ENCODE measurements at regions of chr20 and their contacts with region 1.

Region 1: DNA sequence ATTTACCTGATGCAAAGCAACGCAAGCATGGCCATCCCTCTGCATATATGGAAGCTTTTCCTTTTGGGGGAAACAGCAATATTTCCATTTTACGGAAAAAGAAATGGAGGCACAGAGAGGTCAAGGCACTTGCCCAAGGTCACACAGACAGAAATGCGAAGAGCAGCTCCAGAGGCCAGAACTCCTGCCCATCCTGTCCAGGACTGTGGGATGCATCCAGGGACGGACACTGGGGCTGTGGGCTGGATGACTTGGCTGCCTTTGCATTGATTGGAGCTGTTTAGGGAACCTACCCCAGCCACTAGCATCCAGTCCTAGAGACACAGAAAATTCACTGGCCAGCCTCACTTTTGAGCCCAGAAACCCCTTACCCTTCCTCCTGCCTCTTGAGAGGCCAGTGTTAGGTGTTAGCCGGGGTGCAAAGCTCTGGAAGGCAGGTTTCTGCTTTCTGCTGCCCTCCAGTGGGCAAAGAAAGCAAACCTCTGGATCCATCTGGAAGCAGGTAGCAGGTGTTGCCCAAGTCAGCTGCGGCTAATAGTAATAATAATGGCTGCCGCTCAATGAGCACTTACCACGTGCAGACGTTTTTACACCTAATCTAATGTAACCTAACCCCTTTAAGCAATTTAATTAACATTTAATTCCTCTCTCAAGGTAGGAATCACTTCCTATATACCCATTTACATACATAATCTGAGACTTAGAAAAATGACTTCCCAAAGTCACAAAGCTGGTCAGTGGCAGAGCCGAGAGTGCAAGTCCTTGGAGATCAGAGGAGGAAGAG is 31.7 kb upstream of the CCN5 start:
- DNase-seq: peak; percentile 75
- H3K4me3 ChIP-seq: no peak overlapping the region; a peak in 1 of 4 replicates
- H3K27ac ChIP-seq: no peak overlapping the region
- H3K4me1 ChIP-seq: peaks cover 0 to 10% of the 10 kb centered on the region in 2 experiments; a peak in 1 of 4 replicates
- H3K27me3 ChIP-seq: no peaks in the 10 kb centered on the region
- CTCF ChIP-seq: peak; percentile 77
- EP300 ChIP-seq: no peak
- RAD21 ChIP-seq: peak; percentile 70

Region 2: DNA sequence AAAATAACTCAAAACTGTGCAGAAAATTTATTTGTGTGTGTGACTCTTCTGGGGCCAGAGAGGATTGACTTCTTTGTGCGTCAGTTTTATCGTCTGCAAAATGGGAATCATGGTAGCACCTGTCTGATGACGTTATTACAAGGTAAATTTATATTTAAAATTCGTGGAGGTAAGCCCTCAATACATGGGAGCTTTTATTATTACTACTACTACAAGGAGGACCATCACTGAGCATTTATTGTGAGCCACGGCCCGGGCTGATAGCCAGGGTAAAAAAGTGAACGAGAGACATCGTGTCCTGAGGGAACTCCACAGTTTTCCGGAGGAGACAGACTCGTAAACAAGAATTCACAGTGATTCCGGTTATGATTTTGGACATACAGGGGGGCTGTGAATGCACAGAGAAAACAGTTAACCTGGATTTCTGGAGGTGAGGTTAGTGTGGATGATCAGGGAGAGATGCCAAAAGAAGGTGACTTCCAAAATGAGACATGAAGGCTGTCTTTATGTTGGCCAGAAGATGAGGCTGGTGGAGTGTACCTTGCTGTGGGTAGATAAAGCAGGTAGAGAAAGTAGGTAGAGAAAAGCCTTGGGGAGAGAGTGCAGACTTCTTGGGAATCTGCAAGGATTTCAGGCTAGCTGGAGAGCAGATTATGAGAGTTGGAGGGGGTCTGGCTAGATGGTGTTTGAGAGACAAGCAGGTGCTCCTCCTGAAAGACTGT is 151.0 kb before region 1 on chr20:
- CTCF ChIA-PET with region 1: no interaction called
- POLR2A ChIA-PET with region 1: no interaction called
- DNase-seq: no peak
- H3K4me3 ChIP-seq: peak overlapping the region; percentile 67 to 80
- H3K27ac ChIP-seq: peak overlapping the region; percentile 7 to 71
- H3K4me1 ChIP-seq: peaks cover 6 to 11% of the 10 kb centered on the region in 2 experiments
- H3K27me3 ChIP-seq: no peaks in the 10 kb centered on the region
- CTCF ChIP-seq: no peak
- EP300 ChIP-seq: no peak
- RAD21 ChIP-seq: no peak

Region 3: DNA sequence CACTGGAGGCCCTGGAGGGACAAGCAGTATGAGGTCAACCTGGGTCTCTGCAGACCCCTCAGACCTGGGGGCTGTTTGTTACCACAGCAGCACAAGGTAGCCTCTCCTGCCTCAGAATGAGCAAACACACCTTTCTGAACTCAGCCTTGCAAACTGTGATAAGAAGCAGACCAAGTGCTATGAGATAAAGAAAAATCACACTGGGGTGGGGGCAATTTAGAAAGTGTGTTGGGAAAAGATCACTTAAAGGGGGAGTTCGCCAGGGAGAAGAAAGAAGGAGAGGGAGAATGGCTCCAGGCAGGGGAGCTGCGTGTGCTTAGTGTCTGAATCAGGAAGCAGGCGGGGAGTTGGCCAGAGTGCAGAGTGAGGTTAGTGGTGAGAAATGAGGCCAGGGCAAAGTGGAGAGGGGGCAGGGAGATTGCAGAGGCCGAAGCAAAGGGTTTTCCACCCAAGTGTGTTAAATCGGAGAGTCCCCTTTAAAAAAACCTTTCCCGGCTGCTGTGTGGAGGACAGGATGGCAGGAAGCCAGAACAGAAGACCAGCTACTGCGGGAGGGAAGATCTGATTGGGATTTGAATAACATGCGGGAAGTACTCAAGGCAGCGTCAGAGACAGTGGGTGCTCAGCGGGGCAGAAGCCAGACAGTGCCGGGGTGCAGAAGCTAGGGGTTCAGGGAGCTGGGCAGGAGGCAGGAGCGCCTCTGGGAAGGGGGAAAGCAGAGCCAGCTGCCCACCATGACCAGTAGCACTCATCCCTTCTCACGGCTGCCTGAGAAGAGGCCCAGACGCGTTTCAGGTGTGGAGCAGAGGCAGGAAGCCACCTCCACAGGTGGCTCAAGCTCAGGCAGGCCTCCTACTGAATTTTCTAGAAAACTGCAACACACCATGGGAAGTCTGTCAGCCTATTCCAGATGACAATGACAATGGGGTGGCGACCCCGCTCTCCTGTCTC is 41.0 kb before region 1 on chr20:
- CTCF ChIA-PET with region 1: interaction called, 11 read pairs
- POLR2A ChIA-PET with region 1: no interaction called
- DNase-seq: peak; percentile 81
- H3K4me3 ChIP-seq: 0 out of 4 replicates have a peak overlapping the region, but pooled peaks of 1 of the 2 experiments have one; percentile 22
- H3K27ac ChIP-seq: peak overlapping the region; percentile 73 to 76
- H3K4me1 ChIP-seq: peaks cover 24 to 31% of the 10 kb centered on the region in 2 experiments; a peak in 3 of 4 replicates
- H3K27me3 ChIP-seq: no peaks in the 10 kb centered on the region
- CTCF ChIP-seq: no peak
- EP300 ChIP-seq: 0 out of 4 replicates have a peak, but pooled peaks of 1 of the 2 experiments have one; percentile 10
- RAD21 ChIP-seq: no peak; the same call in 1 of the 2 replicates

Region 4: GRCh38 chr20:44702776-44703175 is 19.3 kb after region 1 on chr20:
- CTCF ChIA-PET with region 1: interaction called, 61 read pairs
- POLR2A ChIA-PET with region 1: no interaction called
- DNase-seq: no peak
- H3K4me3 ChIP-seq: no peak overlapping the region
- H3K27ac ChIP-seq: no peak overlapping the region
- H3K4me1 ChIP-seq: peaks cover 5 to 14% of the 10 kb centered on the region in 2 experiments; a peak in 2 of 4 replicates
- H3K27me3 ChIP-seq: no peaks in the 10 kb centered on the region
- CTCF ChIP-seq: no peak
- EP300 ChIP-seq: no peak
- RAD21 ChIP-seq: no peak

Region 5: DNA sequence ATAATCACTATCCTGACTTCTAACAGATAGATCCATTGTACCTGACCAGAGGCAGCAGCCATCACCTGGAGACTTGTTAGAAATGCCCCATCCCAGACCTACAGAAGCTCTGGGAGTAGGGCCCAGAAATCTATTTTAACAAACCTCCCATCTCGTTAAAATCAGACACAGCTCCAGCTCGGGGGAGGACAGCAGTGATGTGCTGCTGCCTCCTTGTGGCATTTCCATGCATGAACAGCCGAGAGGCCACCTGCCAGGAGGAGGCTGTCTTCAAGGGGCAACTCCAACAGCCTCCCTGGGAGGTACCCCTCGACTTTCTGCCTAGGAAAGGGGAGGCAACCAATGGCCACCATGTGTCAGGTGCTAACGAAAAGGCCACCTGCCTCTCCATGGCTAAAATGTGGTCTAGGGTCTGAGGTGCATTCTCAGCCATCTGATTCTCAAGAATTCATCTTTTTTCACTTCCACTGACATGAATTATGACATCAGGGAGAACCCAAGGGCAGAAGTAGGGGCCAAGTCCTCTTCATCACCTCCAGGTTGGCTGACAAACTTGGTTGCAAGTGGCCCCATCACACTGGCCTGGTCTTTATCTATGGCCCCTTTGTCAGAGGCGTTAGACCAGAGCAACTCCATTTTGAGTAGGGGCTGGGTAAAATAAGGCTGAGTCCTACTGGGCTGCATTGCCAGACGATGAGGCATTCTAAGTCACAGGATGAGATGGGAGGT is 50.0 kb after region 1 on chr20:
- CTCF ChIA-PET with region 1: interaction called, 183 read pairs
- POLR2A ChIA-PET with region 1: interaction called, 3 read pairs
- DNase-seq: peak; percentile 71
- H3K4me3 ChIP-seq: no peak overlapping the region; a peak in 1 of 4 replicates
- H3K27ac ChIP-seq: no peak overlapping the region
- H3K4me1 ChIP-seq: peaks cover 17 to 28% of the 10 kb centered on the region in 2 experiments
- H3K27me3 ChIP-seq: no peaks in the 10 kb centered on the region
- CTCF ChIP-seq: peak; percentile 95
- EP300 ChIP-seq: no peak
- RAD21 ChIP-seq: peak; percentile 97

Region 6: DNA sequence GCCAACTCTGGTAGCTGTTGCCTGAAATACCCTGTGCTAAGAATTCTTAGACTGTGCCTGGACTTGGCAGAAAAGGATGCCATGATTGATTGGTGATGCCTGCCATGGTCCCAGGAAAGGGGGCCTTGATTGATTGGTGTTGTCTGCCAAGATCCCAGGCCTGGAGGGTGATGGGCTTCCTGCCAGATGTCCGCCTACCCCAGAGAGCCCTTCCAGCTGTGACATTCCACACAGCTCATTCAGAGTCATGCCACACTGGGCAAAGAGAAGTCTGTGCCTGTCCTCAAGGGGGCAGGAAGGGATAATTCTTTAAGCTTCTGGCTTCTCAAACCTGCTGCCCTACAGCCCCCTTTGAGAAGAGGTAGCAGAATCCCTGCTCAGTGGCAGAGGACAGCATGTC is 102.3 kb after region 1 on chr20:
- CTCF ChIA-PET with region 1: interaction called, 18 read pairs
- POLR2A ChIA-PET with region 1: no interaction called
- DNase-seq: peak; percentile 84
- H3K4me3 ChIP-seq: no peak overlapping the region
- H3K27ac ChIP-seq: peak overlapping the region in 1 of 2 experiments; percentile 47; a peak in 2 of 4 replicates
- H3K4me1 ChIP-seq: peaks cover 0 to 12% of the 10 kb centered on the region in 2 experiments; a peak in 1 of 4 replicates
- H3K27me3 ChIP-seq: no peaks in the 10 kb centered on the region
- CTCF ChIP-seq: peak; percentile 21; the same call in 1 of the 2 replicates
- EP300 ChIP-seq: peak in 1 of 2 experiments; percentile 68; a peak in 1 of 4 replicates
- RAD21 ChIP-seq: peak; percentile 85

Region 7: GRCh38 chr20:44833437-44833836 is 150.0 kb after region 1 on chr20:
- CTCF ChIA-PET with region 1: no interaction called
- POLR2A ChIA-PET with region 1: no interaction called
- DNase-seq: no peak
- H3K4me3 ChIP-seq: no peak overlapping the region
- H3K27ac ChIP-seq: no peak overlapping the region
- H3K4me1 ChIP-seq: no peaks in the 10 kb centered on the region; a peak in 1 of 4 replicates
- H3K27me3 ChIP-seq: peaks cover 23% of the 10 kb centered on the region
- CTCF ChIP-seq: no peak
- EP300 ChIP-seq: no peak
- RAD21 ChIP-seq: no peak

Measured in SK-N-SH (cell line).